Activated T-helper 1 cell treated with anti-CD3 and anti-CD28 coated beads, Interleukin-12 subunit alpha, Interleukin-12 subunit beta, Interleukin-2, Interleukin-4 antibody, amounts not matched to agents 30 ng/mL and 10 ng/mL and 1 ng/mL, durations not matched to agents 14 hours and 24 hours and 36 hours (primary cell): ENCODE measurements at regions of chr4 and their contacts with region 1.

Region 1: DNA sequence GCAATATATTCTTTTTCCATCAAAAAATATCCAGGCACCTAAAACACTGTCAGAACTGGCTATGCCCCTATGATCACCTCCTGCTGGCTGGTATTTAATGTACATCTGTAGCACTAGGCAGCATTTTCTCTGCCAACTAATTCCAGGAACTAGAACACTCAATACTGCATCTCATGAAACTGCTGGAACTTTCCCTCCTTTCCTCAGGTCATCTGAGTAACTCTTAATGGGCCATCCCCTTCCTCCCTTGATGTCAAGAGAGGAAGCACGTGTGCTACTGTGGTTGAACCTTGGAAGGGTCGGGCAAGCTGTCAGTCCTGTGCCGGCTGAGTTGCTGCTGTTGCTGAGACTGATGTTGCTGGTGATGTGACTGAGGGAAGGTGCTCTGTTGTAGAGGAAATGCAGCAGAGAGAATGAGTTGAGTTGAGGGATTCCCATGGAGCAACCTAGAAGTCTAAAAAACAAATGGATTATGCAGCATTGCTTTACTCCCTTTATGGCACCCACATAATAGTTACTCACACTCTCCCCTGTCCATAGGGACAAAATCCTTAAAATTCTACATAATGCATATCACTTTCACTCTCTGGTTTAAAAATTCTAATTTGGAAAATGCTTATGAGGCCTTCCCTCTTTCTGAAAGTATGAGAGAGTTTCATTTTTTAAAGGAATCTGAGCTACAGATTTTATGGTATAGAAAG is 39.5 kb downstream of the TMEM165 start:
- DNase-seq: peak; percentile 1
- H3K4me3 Mint-ChIP-seq: no peak overlapping the region
- H3K27ac Mint-ChIP-seq: peak overlapping the region; percentile 7
- H3K4me1 Mint-ChIP-seq: peaks cover 14% of the 10 kb centered on the region
- H3K27me3 Mint-ChIP-seq: no peaks in the 10 kb centered on the region

Region 2: DNA sequence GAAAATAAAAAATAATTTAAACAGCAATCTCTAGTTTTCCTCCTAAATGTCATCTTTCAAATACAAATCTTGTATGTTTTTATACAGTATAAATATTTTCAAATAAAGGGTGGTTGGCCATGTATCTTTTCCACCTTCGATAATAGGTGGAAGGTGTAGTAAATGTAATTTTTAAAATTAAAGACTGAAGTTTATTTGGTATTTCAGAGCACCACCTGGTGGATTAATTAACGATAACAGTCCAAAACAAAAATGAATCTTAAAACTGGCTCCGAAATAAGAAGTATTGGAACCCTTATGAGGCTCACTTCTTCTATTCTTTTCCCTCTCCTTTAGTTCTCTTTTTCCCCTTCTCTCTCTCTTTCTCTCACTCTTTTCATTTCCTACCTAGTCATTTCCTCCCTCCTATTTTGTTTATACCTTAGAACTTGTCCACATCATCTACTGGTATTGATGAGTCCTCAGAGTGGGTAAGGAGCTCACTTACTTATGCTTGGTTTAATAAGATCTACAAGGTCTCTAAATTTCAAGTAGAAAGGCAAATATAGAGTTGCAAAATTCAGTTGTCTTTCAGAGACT is 301.4 kb after region 1 on chr4:
- intact Hi-C with region 1: loop called (anchors 10 kb)
- DNase-seq: no peak
- H3K4me3 Mint-ChIP-seq: no peak overlapping the region
- H3K27ac Mint-ChIP-seq: no peak overlapping the region
- H3K4me1 Mint-ChIP-seq: no peaks in the 10 kb centered on the region
- H3K27me3 Mint-ChIP-seq: peaks cover 16% of the 10 kb centered on the region